ENCODE measurements at regions of chr14 and their contacts with region 1.

Region 1: DNA sequence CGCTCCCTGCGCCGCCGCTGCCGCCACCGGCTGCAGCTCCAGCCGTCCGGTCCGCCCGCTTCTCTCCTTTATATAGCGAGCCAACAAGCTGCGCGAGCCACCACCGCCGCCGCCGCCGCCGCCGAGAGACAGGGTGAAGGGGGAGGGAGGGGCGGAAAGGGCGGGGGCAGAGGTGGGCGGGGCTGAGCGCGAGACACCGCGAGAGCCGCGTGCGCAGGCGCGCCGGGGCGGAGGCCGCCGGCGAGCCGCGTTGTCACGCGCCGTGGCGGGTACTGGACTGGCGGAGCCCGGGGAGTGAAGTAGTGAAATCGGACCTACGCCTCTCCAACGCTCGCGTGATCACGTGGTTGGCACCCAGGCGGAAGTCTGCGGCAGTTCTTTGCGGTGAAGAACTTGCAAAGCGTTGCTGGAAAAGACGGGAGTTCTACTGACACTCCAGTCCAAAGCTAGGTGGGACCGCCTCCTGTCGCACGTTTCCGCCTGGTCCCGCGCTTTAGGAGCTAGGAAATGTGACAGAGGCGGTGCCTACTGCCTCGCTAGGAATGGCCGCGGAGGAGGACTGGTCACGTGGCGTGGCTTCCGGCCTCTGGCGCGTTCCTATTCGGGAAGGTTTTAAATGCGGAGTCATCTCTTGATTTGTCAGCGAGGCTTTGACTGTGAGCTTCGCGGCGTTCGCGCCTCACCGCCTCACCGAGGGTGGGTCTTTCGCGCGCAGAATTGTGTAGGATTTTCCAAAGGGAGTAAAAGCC is at the start of gene GTF2A1:
- DNase-seq: peak; percentile 94
- H3K4me3 Mint-ChIP-seq: peak within 1 kb of the TSS; percentile 94
- H3K27ac Mint-ChIP-seq: peak within 1 kb of the TSS; percentile 100
- H3K4me1 Mint-ChIP-seq: peaks cover 25% of the 10 kb centered on the region
- H3K27me3 Mint-ChIP-seq: no peaks in the 10 kb centered on the region
- total RNA-seq, gene GTF2A1: 38.3 to 42.9 TPM

Region 2: GRCh38 chr14:80549141-80549540 is 671.9 kb before region 1 on chr14:
- CTCF ChIA-PET with region 1: no interaction called
- intact Hi-C with region 1: no loop called
- DNase-seq: no peak
- H3K4me3 Mint-ChIP-seq: no peak overlapping the region
- H3K27ac Mint-ChIP-seq: no peak overlapping the region
- H3K4me1 Mint-ChIP-seq: no peaks in the 10 kb centered on the region
- H3K27me3 Mint-ChIP-seq: no peaks in the 10 kb centered on the region

Region 3: DNA sequence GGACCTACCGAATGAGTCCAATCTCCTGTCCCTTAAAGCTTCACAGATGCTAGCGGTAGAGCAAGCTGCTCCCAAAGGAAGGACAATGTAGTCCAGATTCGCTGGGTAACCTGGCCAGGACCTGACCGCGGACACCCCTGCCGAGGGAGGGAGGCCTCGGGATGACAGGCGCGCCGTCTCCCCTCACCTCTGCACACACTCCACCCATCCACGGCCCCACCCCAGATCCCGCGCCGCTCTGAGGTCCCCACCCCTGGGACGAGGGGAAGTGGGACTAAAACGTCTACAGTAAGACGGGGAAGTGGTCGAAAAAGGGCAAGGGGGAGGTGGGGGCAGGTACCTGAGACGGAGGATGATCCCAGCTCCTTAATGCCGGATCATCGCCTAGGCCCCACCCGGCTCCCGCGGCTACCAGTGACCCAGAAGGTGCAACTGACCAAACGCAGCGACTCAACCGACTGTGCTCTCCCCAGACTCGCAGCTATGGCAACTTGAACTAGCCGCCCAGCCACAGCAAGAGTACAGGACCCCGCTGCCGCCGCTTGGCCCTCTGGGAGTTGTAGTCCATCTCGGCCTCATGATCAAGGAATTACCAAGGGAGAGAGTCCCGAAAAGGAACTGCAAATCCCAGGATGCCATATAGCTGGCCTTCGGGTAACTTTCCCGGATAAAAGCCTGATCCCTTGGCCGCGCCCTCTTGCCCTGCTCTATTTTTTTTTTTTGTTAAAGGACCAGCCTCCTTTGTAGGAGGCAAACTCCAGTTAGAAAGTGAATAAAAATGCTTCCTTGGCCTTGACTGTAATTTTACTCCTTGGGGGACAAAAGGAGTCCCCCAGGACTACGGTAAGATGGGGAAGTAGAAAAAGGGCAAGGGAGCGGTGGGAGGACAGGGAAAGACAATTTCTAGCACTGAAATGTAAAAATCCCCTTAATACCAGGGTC is 279.5 kb before region 1 on chr14 and contains the start of gene CEP128:
- CTCF ChIA-PET with region 1: no interaction called
- intact Hi-C with region 1: loop called (anchors 1 kb)
- DNase-seq: peak; percentile 90
- H3K4me3 Mint-ChIP-seq: peak within 1 kb of the TSS; percentile 86
- H3K27ac Mint-ChIP-seq: peak within 1 kb of the TSS; percentile 88
- H3K4me1 Mint-ChIP-seq: peaks cover 38% of the 10 kb centered on the region
- H3K27me3 Mint-ChIP-seq: no peaks in the 10 kb centered on the region
- total RNA-seq, gene CEP128: 16.4 to 17.1 TPM

Region 4: GRCh38 chr14:80987235-80988032 is 233.6 kb before region 1 on chr14:
- CTCF ChIA-PET with region 1: no interaction called
- intact Hi-C with region 1: loop called (anchors 2 kb)
- DNase-seq: peak; percentile 80
- H3K4me3 Mint-ChIP-seq: no peak overlapping the region
- H3K27ac Mint-ChIP-seq: no peak overlapping the region
- H3K4me1 Mint-ChIP-seq: no peaks in the 10 kb centered on the region
- H3K27me3 Mint-ChIP-seq: peaks cover 10% of the 10 kb centered on the region

Region 5: GRCh38 chr14:81051547-81051946 is 169.5 kb before region 1 on chr14:
- CTCF ChIA-PET with region 1: no interaction called
- intact Hi-C with region 1: no loop called
- DNase-seq: no peak
- H3K4me3 Mint-ChIP-seq: no peak overlapping the region
- H3K27ac Mint-ChIP-seq: no peak overlapping the region
- H3K4me1 Mint-ChIP-seq: no peaks in the 10 kb centered on the region
- H3K27me3 Mint-ChIP-seq: peaks cover 2% of the 10 kb centered on the region

Region 6: DNA sequence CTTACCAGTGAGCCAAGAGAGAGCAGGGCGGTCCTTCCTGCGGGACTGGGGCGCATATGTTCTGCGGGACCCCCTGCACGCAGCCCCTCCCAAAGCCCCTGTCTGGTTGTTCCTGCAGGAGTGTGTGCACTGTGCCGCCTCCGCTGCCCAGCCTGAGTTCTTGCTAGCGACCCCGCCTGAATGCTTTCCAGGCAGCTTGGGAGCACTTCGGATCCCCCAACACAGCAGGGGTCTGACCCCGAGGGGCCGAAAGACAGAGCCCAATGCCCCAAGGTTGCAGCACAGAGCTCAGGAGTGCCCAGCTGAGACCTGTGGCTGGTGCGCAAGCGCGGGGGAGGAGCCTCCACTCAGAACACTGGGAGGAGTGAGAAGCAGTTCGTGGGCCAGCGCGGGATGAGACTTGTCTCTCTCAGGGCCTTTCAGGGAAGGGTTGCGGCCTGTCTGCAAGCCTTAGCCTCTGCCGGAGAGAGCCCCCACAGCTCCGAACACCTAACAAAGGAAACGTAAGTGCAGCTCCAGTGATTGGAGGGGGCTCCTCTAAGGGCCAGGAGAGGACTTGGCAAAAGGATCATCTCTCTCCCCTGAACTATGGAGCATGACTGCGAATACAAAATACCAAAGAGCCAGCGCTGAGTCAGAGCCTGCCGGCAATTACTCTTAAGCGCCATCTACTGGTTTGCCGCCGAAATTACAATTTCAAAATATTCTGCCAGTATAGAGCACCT is 50.7 kb before region 1 on chr14:
- CTCF ChIA-PET with region 1: interaction called, 4 read pairs
- intact Hi-C with region 1: loop called (anchors 1 kb)
- DNase-seq: peak; percentile 90
- H3K4me3 Mint-ChIP-seq: peak overlapping the region; percentile 85
- H3K27ac Mint-ChIP-seq: peak overlapping the region; percentile 93
- H3K4me1 Mint-ChIP-seq: peaks cover 12% of the 10 kb centered on the region
- H3K27me3 Mint-ChIP-seq: no peaks in the 10 kb centered on the region

Region 7: DNA sequence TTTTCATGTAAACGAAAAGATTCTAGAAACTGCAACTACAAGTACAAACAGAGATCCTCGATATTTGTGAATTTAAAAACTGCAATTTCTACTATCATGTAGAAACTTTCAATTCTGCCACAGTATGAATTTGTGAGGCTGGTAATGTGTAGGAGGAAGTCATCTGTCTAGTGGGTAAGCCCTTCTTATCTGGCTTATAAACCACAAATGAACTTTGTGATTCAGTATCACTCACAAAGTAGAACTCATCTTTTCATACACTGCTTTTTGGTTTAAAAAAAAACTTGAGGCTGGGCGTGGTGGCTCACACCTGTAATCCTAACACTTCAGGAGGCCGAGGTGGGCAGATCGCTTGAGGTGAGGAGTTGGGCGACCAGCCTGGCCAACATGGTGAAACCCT is 20.9 kb before region 1 on chr14:
- CTCF ChIA-PET with region 1: interaction called, 3 read pairs
- intact Hi-C with region 1: loop called (anchors 2 kb)
- DNase-seq: no peak
- H3K4me3 Mint-ChIP-seq: no peak overlapping the region
- H3K27ac Mint-ChIP-seq: no peak overlapping the region
- H3K4me1 Mint-ChIP-seq: peaks cover 29% of the 10 kb centered on the region
- H3K27me3 Mint-ChIP-seq: no peaks in the 10 kb centered on the region

Region 8: DNA sequence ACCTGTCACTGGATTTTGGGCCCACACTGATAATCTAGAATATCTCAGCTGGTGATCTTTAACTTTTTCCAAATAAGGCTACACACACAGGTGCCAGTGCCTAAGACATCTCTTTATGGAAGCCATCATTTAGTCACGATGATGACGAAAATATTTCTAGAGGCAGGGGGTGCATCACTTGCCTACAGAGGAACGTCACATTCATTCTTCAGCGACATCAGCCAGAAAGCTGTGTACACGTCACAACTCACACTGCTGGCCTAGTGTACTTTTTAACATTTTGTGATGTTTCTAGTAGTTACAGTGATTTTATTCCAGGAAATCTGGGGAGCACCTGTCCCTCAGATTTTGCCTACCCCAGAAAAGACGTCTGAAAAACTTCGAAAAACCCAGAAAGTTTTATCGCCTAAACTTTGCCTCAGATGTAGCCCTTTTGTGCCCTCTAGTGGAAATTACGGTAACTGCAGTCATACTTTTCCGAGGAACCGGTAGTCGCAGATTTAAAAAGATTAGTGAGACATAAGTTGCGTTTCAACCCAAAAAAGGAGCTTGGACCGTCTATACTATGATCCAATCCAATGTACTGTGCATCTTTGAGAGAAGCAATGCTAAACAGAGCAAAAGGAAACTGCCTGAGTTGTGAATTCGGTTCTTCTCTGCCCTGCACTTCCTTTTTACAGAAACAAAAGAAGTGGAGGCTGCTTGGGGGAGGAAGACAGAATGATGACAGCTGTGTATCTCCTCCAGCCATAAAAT is 243.4 kb after region 1 on chr14:
- CTCF ChIA-PET with region 1: interaction called, 5 read pairs
- intact Hi-C with region 1: loop called (anchors 1 kb)
- DNase-seq: peak; percentile 75
- H3K4me3 Mint-ChIP-seq: peak overlapping the region; percentile 73
- H3K27ac Mint-ChIP-seq: peak overlapping the region; percentile 78
- H3K4me1 Mint-ChIP-seq: peaks cover 9% of the 10 kb centered on the region
- H3K27me3 Mint-ChIP-seq: no peaks in the 10 kb centered on the region

Region 9: GRCh38 chr14:81533536-81534343 is 312.7 kb after region 1 on chr14 and contains the start of gene SEL1L:
- CTCF ChIA-PET with region 1: interaction called, 4 read pairs
- intact Hi-C with region 1: loop called (anchors 1 kb)
- DNase-seq: peak; percentile 100
- H3K4me3 Mint-ChIP-seq: peak within 1 kb of the TSS; percentile 88
- H3K27ac Mint-ChIP-seq: peak within 1 kb of the TSS; percentile 79
- H3K4me1 Mint-ChIP-seq: peaks cover 52% of the 10 kb centered on the region
- H3K27me3 Mint-ChIP-seq: no peaks in the 10 kb centered on the region
- total RNA-seq, gene SEL1L: 40.5 to 41.2 TPM

Region 10: DNA sequence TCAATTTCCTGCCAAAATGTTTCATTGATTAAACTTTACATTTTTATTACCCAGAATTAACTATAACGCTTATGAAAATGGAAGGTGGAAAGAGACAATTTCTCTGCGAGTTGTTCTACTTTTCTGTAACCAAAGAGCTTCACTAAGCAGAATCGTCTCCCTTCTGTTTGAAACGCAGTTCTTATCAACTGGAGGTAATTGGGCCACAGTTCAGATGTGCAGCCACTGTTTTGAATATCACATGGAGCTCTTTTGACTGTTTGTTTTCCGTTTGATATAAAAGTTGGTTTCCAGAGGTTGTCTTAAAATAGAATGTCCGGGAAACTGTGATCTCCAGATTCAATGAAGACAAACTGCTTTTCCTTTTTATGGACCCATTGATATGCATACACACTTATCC is 495.9 kb after region 1 on chr14:
- CTCF ChIA-PET with region 1: no interaction called
- intact Hi-C with region 1: no loop called
- DNase-seq: no peak
- H3K4me3 Mint-ChIP-seq: no peak overlapping the region
- H3K27ac Mint-ChIP-seq: no peak overlapping the region
- H3K4me1 Mint-ChIP-seq: no peaks in the 10 kb centered on the region
- H3K27me3 Mint-ChIP-seq: no peaks in the 10 kb centered on the region

Measured in activated naive CD4-positive, alpha-beta T cell treated with anti-CD3 and anti-CD28 coated beads for 36 hours (primary cell).